ENCODE measurements at regions of chr1 and their contacts with region 1.

Region 1: DNA sequence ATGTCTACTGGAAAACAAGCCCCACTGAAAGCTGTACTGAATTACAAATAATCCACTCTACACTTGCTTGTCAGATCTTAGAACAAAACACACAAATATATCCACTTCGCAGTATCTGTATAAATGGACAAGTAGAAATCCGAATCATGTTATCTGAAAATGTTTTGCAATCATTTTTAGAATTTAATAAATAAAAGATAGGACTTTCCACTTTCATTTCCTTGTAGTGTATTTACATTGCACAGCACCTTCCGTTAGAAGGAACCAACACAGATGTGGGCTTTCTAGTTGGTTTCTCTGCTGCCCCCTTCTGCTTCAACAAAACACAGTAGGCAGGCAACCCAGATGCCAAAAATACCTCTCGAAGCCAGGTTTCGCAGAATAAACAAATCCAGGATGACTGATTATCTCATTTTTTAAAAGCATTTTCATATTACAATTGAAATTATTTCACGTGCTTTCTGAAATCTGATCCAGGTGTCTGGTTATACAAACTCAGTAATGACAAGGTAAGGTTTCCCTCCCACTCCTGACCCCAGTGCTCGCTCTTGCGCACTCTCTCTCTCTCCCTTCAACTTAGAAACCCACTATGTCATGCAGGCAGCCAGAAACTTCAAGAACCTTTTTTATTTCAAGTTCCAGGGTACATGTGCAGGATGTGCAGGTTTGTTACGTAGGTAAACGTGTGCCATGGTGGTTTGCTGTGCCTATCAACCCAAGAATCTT is 389.9 kb downstream of the SMYD3 start:
- DNase-seq: peak; percentile 67
- H3K4me3 Mint-ChIP-seq: no peak overlapping the region
- H3K27ac Mint-ChIP-seq: no peak overlapping the region
- H3K4me1 Mint-ChIP-seq: peaks cover 8% of the 10 kb centered on the region
- H3K27me3 Mint-ChIP-seq: no peaks in the 10 kb centered on the region
- CTCF ChIP-seq: peak; percentile 48

Region 2: DNA sequence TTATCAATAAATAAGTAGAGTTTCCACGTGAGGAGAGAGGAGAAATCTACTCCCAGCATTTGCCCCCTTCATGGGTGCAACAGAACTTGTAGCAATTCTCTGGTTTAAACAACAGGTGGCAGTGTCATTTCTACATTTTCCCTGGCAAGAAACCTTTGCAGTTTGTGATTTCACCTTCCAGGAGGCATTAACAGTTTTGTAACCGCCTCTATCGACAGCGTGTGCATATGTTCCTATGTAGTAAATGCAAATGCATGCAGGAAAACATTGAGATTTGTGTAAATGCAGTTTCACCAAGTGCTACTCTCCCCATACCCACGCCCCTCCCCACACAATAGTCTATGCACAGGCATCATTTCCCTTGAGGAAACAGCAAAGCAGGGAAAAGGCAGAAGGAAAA is 104.9 kb before region 1 on chr1:
- CTCF ChIA-PET with region 1: no interaction called
- intact Hi-C with region 1: loop called (anchors 2 kb)
- DNase-seq: peak; percentile 17
- H3K4me3 Mint-ChIP-seq: no peak overlapping the region
- H3K27ac Mint-ChIP-seq: no peak overlapping the region
- H3K4me1 Mint-ChIP-seq: no peaks in the 10 kb centered on the region
- H3K27me3 Mint-ChIP-seq: no peaks in the 10 kb centered on the region
- CTCF ChIP-seq: peak; percentile 55

Region 3: DNA sequence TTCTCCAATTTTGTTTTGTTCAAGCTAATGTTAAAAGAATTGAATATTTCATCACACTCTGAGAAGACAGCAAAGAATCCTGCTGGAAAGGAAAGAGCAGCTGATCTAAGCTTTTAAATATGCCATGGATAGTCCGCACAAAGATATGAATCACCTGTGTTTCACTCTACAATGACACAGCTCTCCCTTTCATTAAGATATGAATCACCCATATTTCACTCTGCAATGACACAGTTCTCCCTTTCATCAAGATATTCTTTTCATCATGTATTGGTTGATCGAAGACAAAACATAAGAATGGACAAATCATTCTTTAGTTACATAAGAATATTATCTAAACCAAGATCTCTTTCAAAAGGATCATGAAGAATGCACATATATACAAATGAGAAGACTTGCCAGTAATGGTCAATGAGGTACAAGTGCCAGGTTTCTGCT is 22.5 kb after region 1 on chr1:
- CTCF ChIA-PET with region 1: no interaction called
- intact Hi-C with region 1: no loop called
- DNase-seq: peak; percentile 15
- H3K4me3 Mint-ChIP-seq: no peak overlapping the region
- H3K27ac Mint-ChIP-seq: peak overlapping the region; percentile 90
- H3K4me1 Mint-ChIP-seq: peaks cover 47% of the 10 kb centered on the region
- H3K27me3 Mint-ChIP-seq: no peaks in the 10 kb centered on the region
- CTCF ChIP-seq: no peak

Region 4: GRCh38 chr1:246155923-246156322 is 38.7 kb after region 1 on chr1:
- CTCF ChIA-PET with region 1: no interaction called
- intact Hi-C with region 1: loop called (anchors 2 kb)
- DNase-seq: no peak
- H3K4me3 Mint-ChIP-seq: no peak overlapping the region
- H3K27ac Mint-ChIP-seq: peak overlapping the region; percentile 77
- H3K4me1 Mint-ChIP-seq: peaks cover 50% of the 10 kb centered on the region
- H3K27me3 Mint-ChIP-seq: no peaks in the 10 kb centered on the region
- CTCF ChIP-seq: no peak